Activated B cell treated with CpG ODN at 0.5 μM for 24 hours (primary cell): ENCODE measurements at regions of chr17 and their contacts with region 1.

Region 1: DNA sequence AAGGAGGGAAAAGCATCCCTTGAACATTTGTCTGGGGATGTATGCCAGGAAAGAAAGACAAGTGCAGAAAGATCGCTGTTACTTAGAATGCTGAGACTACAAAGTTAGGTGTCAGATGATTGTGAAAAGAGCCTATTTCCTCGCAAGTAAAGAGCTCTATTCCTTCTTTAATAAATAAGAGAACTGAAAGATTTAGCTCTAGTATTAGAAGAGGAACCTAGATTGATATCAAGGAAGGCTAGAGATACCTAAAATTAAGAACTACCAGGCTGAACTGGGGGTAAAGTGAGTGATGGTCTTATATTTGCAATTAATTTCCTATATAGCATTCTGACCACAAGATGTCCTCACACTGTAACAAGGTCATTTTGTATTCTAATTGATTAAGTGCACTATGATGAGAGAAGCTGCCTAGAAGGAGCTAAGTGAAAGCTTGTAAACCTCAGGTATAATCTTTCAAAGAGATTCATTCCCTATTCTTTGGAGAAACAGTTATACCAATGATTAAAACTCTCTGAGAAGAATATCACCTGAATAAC is 62.3 kb downstream of the SSH2 start:
- DNase-seq: no peak
- ATAC-seq: peak; percentile 37
- H3K4me3 Mint-ChIP-seq: no peak overlapping the region
- H3K27ac Mint-ChIP-seq: peak overlapping the region; percentile 3
- H3K4me1 Mint-ChIP-seq: peaks cover 49% of the 10 kb centered on the region
- H3K27me3 Mint-ChIP-seq: no peaks in the 10 kb centered on the region
- CTCF ChIP-seq: no peak

Region 2: DNA sequence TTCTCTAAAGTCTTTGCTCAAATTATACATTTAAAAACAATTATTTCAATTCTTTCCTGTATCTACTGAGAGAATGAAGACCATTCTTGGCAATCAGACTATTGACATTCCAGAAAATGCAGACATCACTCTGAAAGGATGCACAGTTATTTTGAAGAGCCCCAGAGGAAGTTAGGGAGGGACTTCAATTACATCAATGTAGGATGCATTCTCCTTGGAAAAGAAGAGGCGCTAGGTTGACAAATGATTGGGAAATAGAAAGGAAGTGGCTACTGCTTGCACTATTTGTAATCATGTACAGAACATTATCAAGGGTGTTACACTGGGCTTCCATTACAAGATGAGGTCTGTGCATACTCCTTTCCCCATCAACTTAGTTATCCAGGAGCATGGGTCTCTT is 12.0 kb before region 1 on chr17:
- CTCF ChIA-PET with region 1: interaction called, 3 read pairs
- POLR2A ChIA-PET with region 1: interaction called, 12 read pairs
- intact Hi-C with region 1: no loop called
- DNase-seq: no peak
- ATAC-seq: no peak
- H3K4me3 Mint-ChIP-seq: no peak overlapping the region
- H3K27ac Mint-ChIP-seq: peak overlapping the region; percentile 7
- H3K4me1 Mint-ChIP-seq: peaks cover 14% of the 10 kb centered on the region
- H3K27me3 Mint-ChIP-seq: no peaks in the 10 kb centered on the region
- CTCF ChIP-seq: no peak

Region 3: GRCh38 chr17:29903471-29903870 is 35.8 kb after region 1 on chr17:
- CTCF ChIA-PET with region 1: no interaction called
- POLR2A ChIA-PET with region 1: no interaction called
- intact Hi-C with region 1: loop called (anchors 5 kb)
- DNase-seq: no peak
- ATAC-seq: no peak
- H3K4me3 Mint-ChIP-seq: no peak overlapping the region
- H3K27ac Mint-ChIP-seq: no peak overlapping the region
- H3K4me1 Mint-ChIP-seq: peaks cover 40% of the 10 kb centered on the region
- H3K27me3 Mint-ChIP-seq: no peaks in the 10 kb centered on the region
- CTCF ChIP-seq: no peak

Region 4: DNA sequence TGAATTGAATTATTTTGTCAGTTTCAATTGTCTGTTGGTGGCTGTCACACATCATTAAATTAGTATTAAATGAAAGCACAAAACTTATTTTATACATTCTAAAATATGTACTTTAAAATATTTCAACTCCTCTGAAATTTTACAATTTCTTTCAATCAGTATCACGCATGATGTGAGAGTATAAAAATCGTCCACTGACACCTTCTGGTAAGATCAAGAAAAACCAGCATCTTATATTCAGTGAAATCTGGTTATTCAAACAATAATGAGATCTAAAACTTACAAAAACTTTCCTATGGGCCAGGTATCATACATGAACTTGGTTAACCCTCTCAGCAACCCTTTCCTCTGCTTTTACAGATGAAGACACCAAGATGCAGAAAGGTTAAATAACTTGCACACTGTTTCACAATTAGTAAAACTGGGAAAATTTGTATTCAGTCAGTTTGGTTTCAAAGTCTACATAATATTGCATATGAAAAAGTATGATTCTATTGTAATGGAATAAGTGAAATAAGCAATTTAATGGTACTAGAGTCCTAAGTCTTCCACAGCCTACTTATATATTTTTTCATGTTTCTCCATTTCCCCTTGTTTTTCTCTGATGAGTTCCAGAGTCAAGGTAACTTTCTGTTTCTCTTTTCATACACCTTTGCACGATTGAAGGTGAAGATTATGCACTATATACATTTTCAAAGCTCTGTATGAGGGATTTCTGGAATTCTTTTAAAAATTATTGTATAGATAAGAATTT is 132.5 kb after region 1 on chr17:
- CTCF ChIA-PET with region 1: interaction called, 4 read pairs
- POLR2A ChIA-PET with region 1: no interaction called
- intact Hi-C with region 1: loop called (anchors 10 kb)
- DNase-seq: no peak
- ATAC-seq: no peak
- H3K4me3 Mint-ChIP-seq: no peak overlapping the region
- H3K27ac Mint-ChIP-seq: no peak overlapping the region
- H3K4me1 Mint-ChIP-seq: no peaks in the 10 kb centered on the region
- H3K27me3 Mint-ChIP-seq: no peaks in the 10 kb centered on the region
- CTCF ChIP-seq: no peak